KBM-7 (cell line): ENCODE measurements at regions of chr11 and their contacts with region 1.

Region 1: DNA sequence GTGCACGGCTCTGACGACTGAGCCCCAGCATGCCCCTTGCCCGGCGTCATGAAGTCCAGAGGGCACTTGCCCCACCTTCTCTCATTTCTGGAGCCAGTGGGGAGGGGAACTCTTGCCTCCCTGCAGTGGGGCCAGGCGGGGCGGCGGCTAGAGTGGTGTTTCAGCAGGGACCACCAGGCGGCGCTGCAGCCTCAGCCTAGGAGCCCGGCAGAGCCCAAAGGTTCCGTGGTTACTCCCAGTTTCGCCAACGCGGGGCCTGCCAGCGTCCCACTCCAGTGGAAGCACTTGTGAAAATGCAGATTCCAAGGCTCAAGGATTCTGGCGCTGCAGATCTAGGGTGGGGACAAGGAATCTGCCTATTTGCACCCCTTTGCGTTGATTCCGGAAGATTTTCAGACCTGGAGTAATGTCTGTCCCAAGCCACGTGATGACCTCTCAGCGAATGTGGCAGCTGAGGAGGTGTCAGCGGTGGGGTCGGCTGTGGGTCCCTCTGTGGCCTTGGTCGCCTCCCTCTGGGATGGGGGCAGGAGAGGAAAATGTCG is 55.7 kb downstream of the CD82 start:
- DNase-seq: peak; percentile 73

Region 2: GRCh38 chr11:43920598-43921419 is 700.4 kb before region 1 on chr11:
- in situ Hi-C with region 1: no loop called
- DNase-seq: no peak

Region 3: DNA sequence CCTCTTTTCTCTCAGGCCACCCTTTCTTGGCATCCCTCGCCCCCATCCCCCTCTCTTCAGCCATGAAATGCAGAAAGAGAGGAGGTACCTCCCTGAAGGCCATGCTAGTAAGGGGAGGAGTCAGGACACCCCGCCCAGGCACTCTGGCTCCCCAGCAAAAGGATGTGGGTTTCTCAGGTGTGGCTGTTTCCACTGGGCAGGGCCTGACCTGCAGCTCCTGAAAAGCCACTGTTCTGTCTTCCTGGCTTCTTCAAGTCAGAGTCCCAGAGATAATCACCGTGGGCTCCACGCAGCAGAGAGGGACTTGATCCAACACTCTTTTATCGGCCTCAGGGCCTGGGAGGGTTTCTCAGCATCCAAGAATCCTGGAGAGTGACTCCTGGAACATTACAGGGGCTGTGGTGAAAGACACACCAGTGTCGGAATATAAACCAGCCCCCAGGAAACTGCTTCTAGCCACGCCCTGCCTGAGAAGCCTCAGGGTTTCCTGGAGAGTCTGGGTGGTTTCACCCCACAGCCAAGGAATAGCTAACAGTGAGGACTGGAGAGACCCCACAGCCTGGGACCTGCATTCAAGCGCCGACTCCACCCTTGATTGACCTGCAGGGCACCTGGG is 59.9 kb after region 1 on chr11:
- in situ Hi-C with region 1: no loop called
- DNase-seq: no peak

Region 4: GRCh38 chr11:44911029-44911814 is 290.0 kb after region 1 on chr11:
- in situ Hi-C with region 1: loop called (anchors 10 kb)
- DNase-seq: peak; percentile 77